ENCODE measurements at regions of chrX and their contacts with region 1.

Region 1: DNA sequence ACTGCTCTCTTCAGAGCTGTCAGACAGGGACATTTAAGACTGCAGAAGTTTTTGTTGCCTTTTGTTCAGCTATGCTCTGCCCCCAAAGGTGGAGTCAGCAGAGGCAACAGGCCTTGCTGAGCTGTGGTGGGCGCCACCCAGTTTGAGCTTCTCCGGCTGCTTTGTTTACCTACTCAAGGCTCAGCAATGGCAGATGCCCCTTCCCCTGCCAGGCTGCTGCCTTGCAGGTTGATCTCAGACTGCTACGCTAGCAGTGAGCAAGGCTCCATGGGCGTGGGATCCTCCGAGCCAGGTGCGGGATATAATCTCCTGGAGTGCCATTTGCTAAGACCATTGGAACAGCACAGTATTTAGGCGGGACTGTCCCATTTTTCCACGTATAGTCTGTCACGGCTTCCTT is 371.4 kb upstream of the AMOT start:
- DNase-seq: no peak
- ATAC-seq: no peak
- H3K4me3 ChIP-seq: no peak overlapping the region
- H3K27ac ChIP-seq: no peak overlapping the region
- H3K4me1 ChIP-seq: no peaks in the 10 kb centered on the region
- H3K27me3 ChIP-seq: no peaks in the 10 kb centered on the region
- CTCF ChIP-seq: no peak
- POLR2A ChIP-seq: no peak

Region 2: DNA sequence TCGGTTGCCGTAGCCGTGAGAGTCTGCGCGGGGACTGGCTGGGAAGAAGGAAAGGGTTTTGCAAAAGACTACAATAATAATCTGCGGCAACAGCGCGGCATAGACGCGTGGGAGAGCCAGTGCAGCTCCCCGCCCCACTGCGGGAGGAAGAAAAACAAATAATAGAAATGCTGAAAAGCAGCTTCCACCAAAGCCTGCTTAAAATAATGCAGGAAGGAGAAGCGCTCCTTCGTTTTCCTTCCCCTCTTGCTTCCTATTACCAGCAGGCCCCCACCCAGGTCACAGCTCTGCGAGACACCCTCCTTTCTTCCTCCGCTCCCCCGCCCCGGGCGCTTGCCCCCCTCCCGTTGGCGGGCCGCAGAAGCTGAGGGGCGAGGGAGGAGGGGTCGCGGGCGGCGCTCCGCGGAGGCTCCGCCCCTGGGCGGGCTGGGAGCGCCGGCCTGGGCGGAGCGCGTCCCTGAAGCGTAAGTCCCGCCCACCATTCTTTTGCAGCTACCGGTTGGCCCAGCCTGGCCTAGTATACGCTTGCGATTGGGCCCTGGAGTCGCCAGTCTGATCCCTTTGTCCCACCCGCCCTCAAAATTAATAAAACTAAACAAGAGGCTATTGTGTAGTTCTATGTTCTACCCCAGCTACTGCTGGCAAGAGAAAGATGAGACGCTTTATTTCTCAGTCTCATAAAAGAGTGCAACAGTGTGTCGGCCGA is 370.8 kb before region 1 on chrX:
- intact Hi-C with region 1: no loop called
- DNase-seq: peak; percentile 81 to 88 (median 87)
- ATAC-seq: peak; percentile 89 to 96 (median 94)
- H3K4me3 ChIP-seq: peak overlapping the region; percentile 49 to 63 (median 62)
- H3K27ac ChIP-seq: peak overlapping the region in 2 of 3 donors; percentile 20 to 58
- H3K4me1 ChIP-seq: no peaks in the 10 kb centered on the region
- H3K27me3 ChIP-seq: no peaks in the 10 kb centered on the region
- CTCF ChIP-seq: no peak
- POLR2A ChIP-seq: no peak

Region 3: GRCh38 chrX:113275804-113276203 is 63.8 kb after region 1 on chrX:
- intact Hi-C with region 1: loop called in 1 of 2 experiments (anchors 10 kb)
- DNase-seq: no peak
- ATAC-seq: no peak
- H3K4me3 ChIP-seq: no peak overlapping the region
- H3K27ac ChIP-seq: no peak overlapping the region
- H3K4me1 ChIP-seq: no peaks in the 10 kb centered on the region
- H3K27me3 ChIP-seq: peaks cover 0 to 8% of the 10 kb centered on the region in 2 donors
- CTCF ChIP-seq: no peak
- POLR2A ChIP-seq: no peak

Measured in right lobe of liver (tissue), 6 donors.